MCF 10A (cell line): ENCODE measurements at regions of chr16 and their contacts with region 1.

Region 1: DNA sequence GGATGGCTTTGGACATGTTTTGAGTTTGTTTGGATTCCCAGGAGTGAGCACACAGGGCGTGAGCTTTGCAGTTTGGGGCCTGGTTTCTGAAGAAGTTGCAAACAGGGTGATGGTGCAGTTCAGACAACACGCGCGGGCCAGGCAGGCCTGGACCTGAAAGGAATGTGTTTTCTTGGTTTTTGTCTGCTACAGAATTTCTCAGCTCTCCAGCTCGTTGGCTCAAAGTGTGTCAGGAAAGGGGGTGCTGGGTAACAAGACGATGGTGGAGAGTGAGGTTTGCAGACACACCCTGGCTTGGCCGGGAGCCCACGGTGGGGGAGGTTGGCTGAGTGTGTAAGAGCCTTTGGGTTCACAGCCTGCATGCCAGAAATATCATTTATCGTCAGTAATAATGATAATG is 82.3 kb downstream of the CMIP start:
- DNase-seq: peak; percentile 96
- H3K4me3 Mint-ChIP-seq: peak overlapping the region; percentile 65
- H3K27ac Mint-ChIP-seq: peak overlapping the region; percentile 97
- H3K4me1 Mint-ChIP-seq: peaks cover 68% of the 10 kb centered on the region
- H3K27me3 Mint-ChIP-seq: no peaks in the 10 kb centered on the region
- CTCF ChIP-seq: no peak

Region 2: DNA sequence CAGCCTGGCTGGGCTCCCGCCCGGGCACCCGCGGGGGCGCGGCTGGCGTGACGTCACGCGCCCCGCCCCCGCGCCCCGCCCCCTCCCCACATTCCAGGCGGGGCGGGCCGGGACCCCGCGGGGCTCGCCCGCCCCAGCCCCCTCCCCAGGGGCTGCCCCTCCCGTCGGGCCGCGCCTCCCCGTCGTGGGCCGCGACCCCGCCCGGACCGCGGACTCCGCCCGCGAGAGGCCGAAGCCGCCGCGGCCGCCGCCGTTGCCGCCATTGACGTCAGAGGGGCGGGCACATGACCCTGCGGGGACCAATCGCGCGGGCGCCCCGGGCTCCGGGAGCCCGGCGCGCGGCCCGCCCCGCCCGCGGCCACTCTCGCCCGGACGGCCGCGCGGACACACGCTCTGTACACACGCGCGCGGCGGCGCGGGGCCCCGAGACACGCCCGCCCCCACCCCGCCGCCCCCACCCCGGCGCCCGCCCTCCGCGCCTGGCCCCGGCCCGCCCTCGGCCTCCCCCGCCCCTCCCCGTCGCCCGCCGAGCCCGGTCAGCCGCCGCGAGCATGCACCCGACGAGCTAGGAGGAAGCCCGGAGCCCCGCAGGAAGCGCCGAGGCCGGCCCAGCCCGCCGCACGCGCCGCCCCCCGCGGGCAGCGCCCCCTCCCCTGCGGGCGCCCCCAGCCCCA is 82.3 kb before region 1 on chr16 and contains the start of gene CMIP:
- CTCF ChIA-PET with region 1: interaction called, 3 read pairs
- POLR2A ChIA-PET with region 1: interaction called, 60 read pairs
- intact Hi-C with region 1: loop called (anchors 2 kb)
- DNase-seq: peak; percentile 67
- H3K4me3 Mint-ChIP-seq: peak within 1 kb of the TSS; percentile 99
- H3K27ac Mint-ChIP-seq: peak within 1 kb of the TSS; percentile 93
- H3K4me1 Mint-ChIP-seq: peaks cover 23% of the 10 kb centered on the region
- H3K27me3 Mint-ChIP-seq: no peaks in the 10 kb centered on the region
- CTCF ChIP-seq: no peak
- total RNA-seq, gene CMIP: 44.3 and 53.6 TPM in 2 replicates

Region 3: DNA sequence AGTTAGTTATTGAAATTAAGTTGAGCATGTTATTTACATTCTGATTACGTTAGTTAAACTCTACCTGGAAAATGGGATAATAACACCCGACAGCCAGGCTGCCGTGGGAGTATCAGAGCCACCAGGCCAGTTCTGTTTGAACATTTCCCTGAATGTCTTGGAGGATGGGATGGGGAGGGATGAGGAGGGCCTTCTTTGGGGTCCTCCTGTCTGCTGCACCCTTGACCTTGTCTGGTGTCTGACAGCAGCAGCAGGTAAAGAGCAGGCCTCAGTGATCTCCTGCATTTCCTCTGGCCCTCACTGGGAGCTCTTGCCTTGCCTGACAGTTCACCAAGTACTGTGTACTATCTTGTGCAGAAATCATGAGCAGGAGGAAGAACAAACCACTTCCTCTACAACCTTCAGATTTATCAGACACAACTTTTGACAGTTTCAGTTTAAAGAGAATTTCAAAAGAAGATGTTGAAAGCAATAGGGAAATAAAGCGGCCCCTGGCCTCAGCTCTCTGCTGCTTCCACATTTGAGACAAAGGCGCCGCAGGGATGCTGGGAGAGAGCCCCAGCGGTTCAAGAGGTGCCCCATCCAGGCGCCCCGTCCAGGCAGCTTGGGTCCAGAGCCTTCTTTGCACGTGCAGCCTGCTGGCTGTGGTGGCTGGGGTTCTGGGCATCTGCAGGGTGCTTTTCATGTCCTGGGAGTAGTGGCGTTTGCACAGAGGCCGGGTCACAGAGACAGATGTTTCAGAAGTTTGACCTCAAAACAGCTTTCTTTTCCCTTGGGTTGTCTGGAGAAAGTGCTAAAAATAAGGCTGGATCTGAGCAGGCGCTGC is 57.0 kb before region 1 on chr16:
- CTCF ChIA-PET with region 1: no interaction called
- POLR2A ChIA-PET with region 1: no interaction called
- intact Hi-C with region 1: no loop called
- DNase-seq: no peak
- H3K4me3 Mint-ChIP-seq: no peak overlapping the region
- H3K27ac Mint-ChIP-seq: no peak overlapping the region
- H3K4me1 Mint-ChIP-seq: no peaks in the 10 kb centered on the region
- H3K27me3 Mint-ChIP-seq: no peaks in the 10 kb centered on the region
- CTCF ChIP-seq: no peak

Region 4: DNA sequence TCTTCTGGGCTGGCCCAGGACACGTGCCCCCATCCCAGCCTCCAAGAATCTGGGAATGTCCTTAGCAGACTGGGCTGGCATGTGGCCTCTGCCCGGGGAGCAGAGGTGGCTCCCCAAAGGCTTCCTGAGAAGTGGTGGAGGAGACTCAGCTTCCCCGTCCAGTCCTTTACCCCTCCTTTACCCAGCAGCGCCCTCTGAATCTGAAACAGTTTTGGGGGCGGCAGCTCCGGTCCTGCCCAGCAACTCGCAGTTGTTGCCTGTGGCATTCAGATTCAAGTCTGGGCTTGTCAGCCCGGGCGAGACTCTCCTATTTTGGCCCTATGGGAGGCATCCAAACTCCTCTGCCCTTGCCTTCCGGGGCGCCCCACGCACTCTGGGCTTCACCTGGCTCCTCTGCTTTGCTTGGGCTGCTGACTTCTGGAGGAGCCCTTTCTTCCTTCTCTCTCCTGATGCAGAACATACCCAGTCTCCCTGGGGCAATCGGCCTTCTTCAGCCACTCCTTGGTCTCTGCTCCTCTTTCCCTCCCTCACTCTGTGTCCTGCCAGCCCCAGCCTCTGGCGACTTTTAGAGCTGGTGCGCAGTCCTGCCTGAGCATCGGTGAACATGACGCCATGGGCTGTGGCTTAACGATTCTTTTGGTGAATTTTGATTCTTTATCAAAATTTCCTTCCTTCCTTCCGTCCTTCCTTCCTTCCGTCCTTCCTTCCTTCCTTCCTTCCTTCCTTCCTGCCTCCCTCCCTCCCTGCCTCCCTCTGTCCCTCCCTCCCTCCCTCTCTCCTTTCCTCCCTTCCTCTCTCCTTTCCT is 27.2 kb before region 1 on chr16:
- CTCF ChIA-PET with region 1: interaction called, 6 read pairs
- POLR2A ChIA-PET with region 1: interaction called, 31 read pairs
- intact Hi-C with region 1: no loop called
- DNase-seq: peak; percentile 62
- H3K4me3 Mint-ChIP-seq: peak overlapping the region; percentile 4
- H3K27ac Mint-ChIP-seq: peak overlapping the region; percentile 84
- H3K4me1 Mint-ChIP-seq: peaks cover 45% of the 10 kb centered on the region
- H3K27me3 Mint-ChIP-seq: no peaks in the 10 kb centered on the region
- CTCF ChIP-seq: no peak

Region 5: DNA sequence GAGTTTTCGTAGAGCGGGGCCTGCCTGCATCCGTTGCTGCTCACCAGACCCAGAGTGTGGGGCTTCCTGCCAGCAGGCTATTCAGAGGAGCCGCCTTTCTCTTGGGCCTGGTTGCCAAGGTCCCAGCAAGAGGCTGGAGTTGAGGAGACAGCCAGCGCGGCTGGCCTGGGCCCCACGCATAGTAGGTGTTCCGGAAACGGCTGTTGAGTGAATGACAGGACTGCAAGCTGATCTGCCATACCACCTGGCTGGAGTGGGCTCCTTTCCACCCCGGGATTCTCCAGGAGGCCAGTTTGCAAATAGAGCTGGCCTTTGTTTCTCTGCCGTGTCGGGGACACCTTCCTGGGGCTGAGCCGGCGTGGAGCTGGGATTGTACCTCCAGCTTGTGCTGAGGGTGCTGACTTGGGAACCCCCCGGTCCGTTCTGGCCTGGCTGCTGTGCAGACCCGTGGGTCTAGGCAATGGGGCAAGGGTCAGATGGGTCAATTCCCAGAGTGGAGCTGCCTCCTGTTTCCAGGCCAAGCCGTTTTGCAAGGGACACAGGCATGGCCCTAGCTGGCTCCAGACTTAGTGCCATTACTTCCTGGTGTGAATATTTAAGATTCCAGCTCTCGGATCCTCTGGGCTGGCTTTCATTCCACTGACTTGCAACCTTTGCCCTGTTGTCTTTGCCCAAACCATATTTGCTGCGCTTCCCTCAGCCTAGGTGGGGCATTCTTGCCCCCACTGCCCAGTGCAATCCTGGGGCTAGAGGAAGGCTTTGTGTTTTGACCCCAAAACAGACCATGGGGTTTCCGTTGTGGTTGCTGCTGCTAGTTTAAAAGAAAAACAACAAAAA is 13.5 kb before region 1 on chr16:
- CTCF ChIA-PET with region 1: interaction called, 5 read pairs
- POLR2A ChIA-PET with region 1: interaction called, 10 read pairs
- intact Hi-C with region 1: no loop called
- DNase-seq: no peak
- H3K4me3 Mint-ChIP-seq: no peak overlapping the region
- H3K27ac Mint-ChIP-seq: no peak overlapping the region
- H3K4me1 Mint-ChIP-seq: peaks cover 6% of the 10 kb centered on the region
- H3K27me3 Mint-ChIP-seq: no peaks in the 10 kb centered on the region
- CTCF ChIP-seq: no peak

Region 6: GRCh38 chr16:81585785-81586184 is 58.9 kb after region 1 on chr16:
- CTCF ChIA-PET with region 1: interaction called, 4 read pairs
- POLR2A ChIA-PET with region 1: interaction called, 39 read pairs
- intact Hi-C with region 1: loop called (anchors 2 kb)
- DNase-seq: peak; percentile 39
- H3K4me3 Mint-ChIP-seq: no peak overlapping the region
- H3K27ac Mint-ChIP-seq: peak overlapping the region; percentile 77
- H3K4me1 Mint-ChIP-seq: peaks cover 56% of the 10 kb centered on the region
- H3K27me3 Mint-ChIP-seq: no peaks in the 10 kb centered on the region
- CTCF ChIP-seq: no peak

Region 7: DNA sequence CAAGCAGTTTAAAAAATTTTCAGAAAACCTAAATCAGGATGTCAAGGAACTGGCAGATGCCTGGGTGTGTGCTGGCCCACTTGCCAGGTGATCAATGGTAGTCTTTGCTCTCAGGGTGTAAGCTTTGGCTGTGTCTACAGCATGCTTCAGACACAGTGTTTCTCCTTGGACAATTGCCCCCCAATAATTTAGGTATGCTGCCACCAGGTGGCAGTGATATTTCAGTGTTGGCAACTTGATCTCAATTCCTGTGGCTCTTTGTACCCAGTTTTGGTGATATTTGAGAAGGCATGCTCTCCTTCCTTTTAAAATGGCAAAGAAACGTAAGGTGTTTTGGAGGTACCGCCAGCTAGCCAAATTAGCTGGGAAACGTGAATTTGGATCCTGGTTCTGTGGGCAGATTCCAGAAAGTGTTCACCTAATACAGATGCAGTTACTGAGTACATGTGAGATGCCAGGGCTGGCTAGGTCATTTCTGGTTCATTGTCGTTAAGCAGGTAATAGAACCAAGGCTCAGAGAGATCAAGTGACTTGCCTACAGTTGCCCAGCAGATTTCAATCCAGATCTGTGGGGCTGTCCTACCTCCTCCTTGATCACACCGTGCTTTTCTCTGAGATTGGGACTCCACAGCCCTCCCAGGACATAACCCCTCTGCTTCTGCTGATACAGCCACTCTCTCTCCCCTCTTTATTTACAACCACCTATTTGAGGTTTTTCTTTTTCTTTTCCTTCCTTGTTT is 96.6 kb after region 1 on chr16:
- CTCF ChIA-PET with region 1: interaction called, 5 read pairs
- POLR2A ChIA-PET with region 1: interaction called, 15 read pairs
- intact Hi-C with region 1: loop called (anchors 5 kb)
- DNase-seq: peak; percentile 73
- H3K4me3 Mint-ChIP-seq: no peak overlapping the region
- H3K27ac Mint-ChIP-seq: no peak overlapping the region
- H3K4me1 Mint-ChIP-seq: peaks cover 9% of the 10 kb centered on the region
- H3K27me3 Mint-ChIP-seq: no peaks in the 10 kb centered on the region
- CTCF ChIP-seq: peak; percentile 64